Activated B cell treated with CpG ODN at 0.5 μM for 24 hours (primary cell): ENCODE measurements at regions of chr10 and their contacts with region 1.

Region 1: GRCh38 chr10:110610308-110610774 is 33.8 kb upstream of the RBM20 start:
- DNase-seq: no peak
- ATAC-seq: peak; percentile 41
- H3K4me3 Mint-ChIP-seq: no peak overlapping the region
- H3K27ac Mint-ChIP-seq: no peak overlapping the region
- H3K4me1 Mint-ChIP-seq: peaks cover 30% of the 10 kb centered on the region
- H3K27me3 Mint-ChIP-seq: no peaks in the 10 kb centered on the region
- CTCF ChIP-seq: peak; percentile 59

Region 2: GRCh38 chr10:110671788-110672579 is 61.6 kb after region 1 on chr10:
- CTCF ChIA-PET with region 1: interaction called, 12 read pairs
- POLR2A ChIA-PET with region 1: interaction called, 7 read pairs
- intact Hi-C with region 1: loop called (anchors 1 kb)
- DNase-seq: peak; percentile 72
- ATAC-seq: peak; percentile 97
- H3K4me3 Mint-ChIP-seq: peak overlapping the region; percentile 90
- H3K27ac Mint-ChIP-seq: peak overlapping the region; percentile 88
- H3K4me1 Mint-ChIP-seq: peaks cover 4% of the 10 kb centered on the region
- H3K27me3 Mint-ChIP-seq: peaks cover 17% of the 10 kb centered on the region
- CTCF ChIP-seq: peak; percentile 52

Region 3: GRCh38 chr10:110724116-110724921 is 114.0 kb after region 1 on chr10:
- CTCF ChIA-PET with region 1: no interaction called
- POLR2A ChIA-PET with region 1: no interaction called
- intact Hi-C with region 1: loop called (anchors 5 kb)
- DNase-seq: no peak
- ATAC-seq: peak; percentile 64
- H3K4me3 Mint-ChIP-seq: peak overlapping the region; percentile 64
- H3K27ac Mint-ChIP-seq: peak overlapping the region; percentile 56
- H3K4me1 Mint-ChIP-seq: peaks cover 38% of the 10 kb centered on the region
- H3K27me3 Mint-ChIP-seq: peaks cover 2% of the 10 kb centered on the region
- CTCF ChIP-seq: no peak

Region 4: DNA sequence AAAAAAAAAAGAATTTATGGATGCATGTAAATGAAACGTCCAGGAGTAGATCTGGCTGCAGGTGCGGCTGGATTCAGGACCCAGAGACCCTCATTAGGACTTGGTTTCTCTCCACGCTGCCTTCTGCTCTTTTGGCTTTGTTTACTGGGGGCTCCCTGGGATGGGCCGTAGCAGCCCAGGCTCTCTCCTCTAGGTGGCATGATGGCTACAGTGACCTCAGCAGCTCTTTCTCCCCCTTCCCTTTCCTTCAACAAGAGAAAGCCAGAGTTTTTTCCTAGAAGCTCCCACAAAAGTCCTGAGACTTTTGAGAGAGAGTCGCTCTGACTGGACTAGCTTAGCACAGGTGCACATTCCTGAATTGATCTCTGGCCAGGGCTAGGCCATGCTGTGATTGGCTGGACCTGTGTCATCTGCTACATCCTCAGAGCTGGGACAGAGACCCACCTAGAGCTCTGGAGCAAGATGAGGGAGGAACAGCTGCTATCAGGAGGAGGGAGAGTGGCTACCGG is 193.5 kb after region 1 on chr10:
- CTCF ChIA-PET with region 1: interaction called, 3 read pairs
- POLR2A ChIA-PET with region 1: no interaction called
- intact Hi-C with region 1: loop called (anchors 5 kb)
- DNase-seq: peak; percentile 29
- ATAC-seq: peak; percentile 70
- H3K4me3 Mint-ChIP-seq: no peak overlapping the region
- H3K27ac Mint-ChIP-seq: peak overlapping the region; percentile 54
- H3K4me1 Mint-ChIP-seq: peaks cover 26% of the 10 kb centered on the region
- H3K27me3 Mint-ChIP-seq: no peaks in the 10 kb centered on the region
- CTCF ChIP-seq: no peak

Region 5: DNA sequence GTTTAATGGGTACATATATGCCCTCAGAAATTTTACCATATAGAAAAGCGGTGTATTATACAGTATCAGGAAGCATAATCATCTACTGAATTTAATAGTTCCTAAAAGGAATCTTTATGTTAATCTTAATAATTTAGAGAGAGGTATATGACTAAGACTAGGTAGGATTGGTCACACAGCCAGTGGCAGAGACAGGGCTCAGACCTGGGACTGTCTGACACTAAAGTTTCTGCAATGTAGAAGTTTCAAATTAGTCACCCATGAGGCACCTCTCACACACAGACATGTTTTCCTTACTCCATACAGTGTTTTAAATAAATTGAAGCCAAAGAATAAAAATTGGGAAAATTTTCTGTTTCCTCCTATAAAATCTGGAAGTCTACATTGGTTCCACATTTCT is 393.7 kb after region 1 on chr10:
- CTCF ChIA-PET with region 1: no interaction called
- POLR2A ChIA-PET with region 1: no interaction called
- intact Hi-C with region 1: loop called (anchors 10 kb)
- DNase-seq: no peak
- ATAC-seq: no peak
- H3K4me3 Mint-ChIP-seq: no peak overlapping the region
- H3K27ac Mint-ChIP-seq: no peak overlapping the region
- H3K4me1 Mint-ChIP-seq: peaks cover 2% of the 10 kb centered on the region
- H3K27me3 Mint-ChIP-seq: no peaks in the 10 kb centered on the region
- CTCF ChIP-seq: no peak

Region 6: DNA sequence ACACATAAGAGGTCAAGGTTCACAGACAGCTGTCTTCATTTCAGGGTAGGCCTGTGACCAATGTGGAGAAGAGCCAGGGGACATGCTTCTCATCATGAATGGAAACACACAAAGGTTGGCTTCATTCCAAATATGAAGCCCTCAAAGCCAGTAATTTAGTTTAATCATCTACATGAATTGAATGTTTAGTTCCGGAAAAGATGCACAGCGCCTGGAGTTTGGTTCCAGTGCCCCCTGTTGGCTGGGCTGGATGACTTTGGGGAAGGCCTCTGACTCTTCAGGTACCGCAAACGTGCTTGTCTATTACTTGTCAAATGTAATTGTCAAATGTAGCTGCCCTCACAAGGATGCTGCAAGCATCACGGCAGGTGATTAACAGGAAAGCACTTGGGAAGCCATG is 597.2 kb after region 1 on chr10:
- CTCF ChIA-PET with region 1: no interaction called
- POLR2A ChIA-PET with region 1: no interaction called
- intact Hi-C with region 1: loop called (anchors 1 kb)
- DNase-seq: no peak
- ATAC-seq: no peak
- H3K4me3 Mint-ChIP-seq: no peak overlapping the region
- H3K27ac Mint-ChIP-seq: no peak overlapping the region
- H3K4me1 Mint-ChIP-seq: no peaks in the 10 kb centered on the region
- H3K27me3 Mint-ChIP-seq: peaks cover 14% of the 10 kb centered on the region
- CTCF ChIP-seq: no peak